Left lung (tissue), 14 donors: ENCODE measurements at regions of chr2 and their contacts with region 1.

Region 1: GRCh38 chr2:6773007-6773693 is 92.6 kb downstream of the CMPK2 start:
- DNase-seq: peak; percentile 53 to 92 (median 69)
- ATAC-seq: peak; percentile 99
- H3K4me3 ChIP-seq: no peak overlapping the region
- H3K27ac ChIP-seq: no peak overlapping the region
- H3K4me1 ChIP-seq: peaks cover 0 to 7% of the 10 kb centered on the region in 2 donors
- H3K27me3 ChIP-seq: peaks cover 0 to 32% of the 10 kb centered on the region in 2 donors
- CTCF ChIP-seq: peak; percentile 95 to 96

Region 2: GRCh38 chr2:6352906-6353515 is 420.1 kb before region 1 on chr2:
- intact Hi-C with region 1: loop called in 1 of 2 experiments (anchors 10 kb)
- DNase-seq: peak in 3 of 4 donors; percentile 6 to 72 (median 59)
- ATAC-seq: peak; percentile 98
- H3K4me3 ChIP-seq: no peak overlapping the region
- H3K27ac ChIP-seq: no peak overlapping the region
- H3K4me1 ChIP-seq: no peaks in the 10 kb centered on the region
- H3K27me3 ChIP-seq: no peaks in the 10 kb centered on the region
- CTCF ChIP-seq: peak; percentile 45 to 52

Region 3: GRCh38 chr2:6824962-6825361 is 51.8 kb after region 1 on chr2:
- intact Hi-C with region 1: no loop called
- DNase-seq: peak in 2 of 4 donors; percentile 33 to 54
- ATAC-seq: peak; percentile 21
- H3K4me3 ChIP-seq: no peak overlapping the region
- H3K27ac ChIP-seq: no peak overlapping the region
- H3K4me1 ChIP-seq: peaks cover 4 to 18% of the 10 kb centered on the region in 2 donors
- H3K27me3 ChIP-seq: no peaks in the 10 kb centered on the region
- CTCF ChIP-seq: no peak

Region 4: DNA sequence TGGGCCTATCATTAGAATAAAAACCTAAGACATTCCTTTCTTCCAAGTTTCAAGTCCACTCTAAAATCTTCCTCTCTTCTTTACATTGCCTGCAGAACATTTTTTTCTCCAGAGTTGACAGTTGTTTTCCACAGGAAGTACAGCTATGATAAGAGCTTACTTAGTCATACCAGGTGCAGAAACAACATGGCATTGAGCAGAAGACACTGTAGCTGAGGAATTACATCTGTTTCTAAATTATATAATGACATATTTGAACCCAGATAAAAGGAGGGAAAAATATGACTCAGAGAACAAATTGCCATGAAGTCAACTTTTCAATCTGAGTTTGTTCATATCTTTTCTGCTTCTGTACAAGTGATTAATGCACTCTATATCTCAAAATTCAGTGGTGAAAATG is 62.3 kb after region 1 on chr2:
- intact Hi-C with region 1: no loop called
- DNase-seq: no peak
- ATAC-seq: no peak
- H3K4me3 ChIP-seq: no peak overlapping the region
- H3K27ac ChIP-seq: no peak overlapping the region
- H3K4me1 ChIP-seq: no peaks in the 10 kb centered on the region
- H3K27me3 ChIP-seq: no peaks in the 10 kb centered on the region
- CTCF ChIP-seq: no peak

Region 5: GRCh38 chr2:6960659-6961058 is 187.5 kb after region 1 on chr2:
- intact Hi-C with region 1: no loop called
- DNase-seq: peak in 2 of 4 donors; percentile 59 to 79
- ATAC-seq: peak; percentile 71
- H3K4me3 ChIP-seq: no peak overlapping the region
- H3K27ac ChIP-seq: peak overlapping the region in 1 of 2 donors; percentile 44
- H3K4me1 ChIP-seq: peaks cover 0 to 26% of the 10 kb centered on the region in 2 donors
- H3K27me3 ChIP-seq: no peaks in the 10 kb centered on the region
- CTCF ChIP-seq: no peak